PC-3 (cell line): ENCODE measurements at regions of chr9 and their contacts with region 1.

Region 1: GRCh38 chr9:112315331-112316257 is 17.8 kb downstream of the PTBP3 start:
- DNase-seq: no peak
- ATAC-seq: no peak
- H3K4me3 ChIP-seq: no peak overlapping the region
- H3K27ac ChIP-seq: no peak overlapping the region
- H3K4me1 ChIP-seq: no peaks in the 10 kb centered on the region
- H3K27me3 ChIP-seq: no peaks in the 10 kb centered on the region
- CTCF ChIP-seq: no peak

Region 2: DNA sequence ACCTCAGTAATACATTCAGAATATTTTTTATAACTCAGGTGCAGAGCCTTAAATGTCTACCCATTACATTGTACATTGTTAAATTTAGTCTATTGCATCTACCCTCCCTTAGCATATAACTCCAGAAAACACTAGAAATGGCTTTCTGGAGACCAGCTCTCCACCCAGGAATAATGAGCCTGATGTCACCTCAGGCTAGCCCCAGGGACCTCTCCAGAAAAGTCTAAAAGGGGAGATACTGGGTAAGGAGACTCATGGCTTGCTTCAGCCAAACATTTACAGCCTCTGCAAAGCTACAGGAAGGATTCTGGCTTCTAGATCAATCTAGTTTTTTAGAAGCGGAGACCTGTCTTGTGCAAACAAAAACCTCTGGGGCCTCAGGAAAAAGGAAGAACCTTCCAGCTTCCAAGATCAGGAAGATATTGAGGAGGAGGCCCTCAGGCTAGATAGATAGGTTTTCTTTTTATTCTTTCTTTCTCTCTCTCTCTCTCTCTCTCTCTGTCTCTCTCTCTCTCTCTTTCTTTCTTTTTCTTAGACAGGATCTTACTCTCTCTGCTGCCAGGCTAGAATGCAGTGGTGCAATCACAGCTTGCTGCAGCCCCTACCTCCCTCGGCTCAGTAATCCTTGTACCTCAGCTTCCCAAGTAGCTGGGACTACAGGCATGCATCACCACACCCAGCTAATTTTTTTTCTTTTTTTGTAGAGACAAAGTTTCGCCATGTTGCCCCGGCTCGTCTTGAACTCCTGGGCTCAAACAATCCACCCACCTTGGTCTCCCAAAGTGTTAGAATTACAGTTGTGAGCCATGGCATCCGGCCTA is 126.5 kb before region 1 on chr9:
- CTCF ChIA-PET with region 1: no interaction called
- POLR2A ChIA-PET with region 1: interaction called, 12 read pairs
- intact Hi-C with region 1: no loop called
- DNase-seq: no peak
- ATAC-seq: no peak
- H3K4me3 ChIP-seq: no peak overlapping the region
- H3K27ac ChIP-seq: no peak overlapping the region
- H3K4me1 ChIP-seq: no peaks in the 10 kb centered on the region
- H3K27me3 ChIP-seq: no peaks in the 10 kb centered on the region
- CTCF ChIP-seq: no peak

Region 3: DNA sequence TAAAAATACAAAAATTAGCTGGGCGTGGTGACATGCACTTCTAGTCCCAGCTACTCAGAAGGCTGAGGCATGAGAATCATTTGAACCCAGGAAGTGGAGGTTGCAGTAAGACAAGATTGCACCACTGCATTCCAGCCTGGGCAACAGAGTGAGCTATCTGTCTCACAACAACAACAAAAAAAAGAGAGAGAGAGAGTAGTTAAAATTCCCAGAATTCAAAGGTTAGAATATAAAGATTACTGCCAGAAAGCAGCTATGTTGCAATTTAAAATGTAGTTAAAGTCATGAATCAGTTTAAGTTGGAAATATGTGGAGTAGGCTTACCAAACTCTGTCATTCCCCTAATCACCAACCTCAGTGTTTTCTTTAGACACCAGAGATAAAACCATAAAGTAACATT is 81.8 kb before region 1 on chr9:
- CTCF ChIA-PET with region 1: no interaction called
- POLR2A ChIA-PET with region 1: no interaction called
- intact Hi-C with region 1: no loop called
- DNase-seq: no peak
- ATAC-seq: no peak
- H3K4me3 ChIP-seq: no peak overlapping the region
- H3K27ac ChIP-seq: no peak overlapping the region
- H3K4me1 ChIP-seq: no peaks in the 10 kb centered on the region
- H3K27me3 ChIP-seq: no peaks in the 10 kb centered on the region
- CTCF ChIP-seq: no peak